Transverse colon (tissue), 4 donors: ENCODE measurements at regions of chr11 and their contacts with region 1.

Region 1: GRCh38 chr11:115207166-115207591 is 297.0 kb downstream of the CADM1 start:
- DNase-seq: no peak
- H3K4me3 ChIP-seq: no peak overlapping the region
- H3K27ac ChIP-seq: no peak overlapping the region
- H3K4me1 ChIP-seq: no peaks in the 10 kb centered on the region
- H3K27me3 ChIP-seq: no peaks in the 10 kb centered on the region
- CTCF ChIP-seq: no peak
- EP300 ChIP-seq: no peak
- POLR2A ChIP-seq: no peak

Region 2: GRCh38 chr11:116505298-116506262 is 1298.4 kb after region 1 on chr11:
- in situ Hi-C with region 1: no loop called
- intact Hi-C with region 1: loop called (anchors 5 kb)
- DNase-seq: no peak
- H3K4me3 ChIP-seq: no peak overlapping the region
- H3K27ac ChIP-seq: no peak overlapping the region
- H3K4me1 ChIP-seq: no peaks in the 10 kb centered on the region
- H3K27me3 ChIP-seq: peaks cover 25% of the 10 kb centered on the region
- CTCF ChIP-seq: no peak
- EP300 ChIP-seq: no peak
- POLR2A ChIP-seq: no peak